ENCODE measurements at regions of chr4 and their contacts with region 1.

Region 1: DNA sequence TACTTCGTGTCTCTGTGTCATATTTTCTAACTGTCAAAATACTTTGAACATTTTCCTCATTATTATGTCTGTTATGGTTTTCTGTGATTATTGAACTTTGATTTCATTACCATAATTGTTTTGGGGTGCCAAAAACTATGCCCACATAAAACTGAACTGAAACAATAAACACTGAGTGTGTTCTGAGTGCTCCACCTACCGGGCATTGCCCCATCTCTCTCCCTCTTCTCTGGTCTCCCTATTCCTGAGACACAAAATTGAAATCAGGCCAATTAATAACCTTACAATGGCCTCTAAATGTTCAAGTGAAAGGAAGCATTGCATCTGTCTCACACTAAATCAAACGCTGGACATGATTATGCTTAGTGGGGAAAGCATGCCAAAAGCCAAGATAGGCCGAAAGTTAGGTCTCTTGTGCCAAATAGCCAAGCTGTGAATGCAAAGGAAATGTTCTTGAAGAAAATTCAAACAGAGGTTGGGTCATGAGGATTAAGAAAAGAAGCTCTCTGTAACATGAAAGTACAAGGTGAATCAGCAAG is 972.3 kb downstream of the PCDH7 start:
- DNase-seq: no peak
- ATAC-seq: no peak
- H3K4me3 ChIP-seq: no peak overlapping the region
- H3K4me3 Mint-ChIP-seq: no peak overlapping the region
- H3K27ac ChIP-seq: no peak overlapping the region
- H3K27ac Mint-ChIP-seq: no peak overlapping the region
- H3K4me1 ChIP-seq: no peaks in the 10 kb centered on the region
- H3K4me1 Mint-ChIP-seq: no peaks in the 10 kb centered on the region
- H3K27me3 ChIP-seq: no peaks in the 10 kb centered on the region
- H3K27me3 Mint-ChIP-seq: no peaks in the 10 kb centered on the region
- CTCF ChIP-seq: no peak

Region 2: DNA sequence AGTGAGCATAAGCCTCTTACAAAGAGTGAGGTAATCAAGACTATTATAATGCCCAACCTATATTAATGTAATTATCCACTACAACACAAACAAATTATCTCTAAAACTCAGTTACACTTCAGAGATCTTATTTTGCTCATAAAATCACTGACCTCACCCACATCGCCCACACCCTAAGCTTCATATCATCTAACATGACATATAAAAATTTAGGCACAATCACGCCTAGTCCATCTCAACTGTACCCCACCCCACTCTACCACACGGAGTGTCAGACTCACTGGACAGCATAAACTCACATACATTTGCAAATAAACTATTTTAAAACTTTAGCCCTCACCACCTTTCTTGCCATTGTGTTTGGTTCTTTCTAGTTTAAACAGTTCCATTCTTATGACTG is 719.9 kb before region 1 on chr4:
- intact Hi-C with region 1: loop called (anchors 5 kb)
- DNase-seq: no peak
- ATAC-seq: no peak
- H3K4me3 ChIP-seq: no peak overlapping the region
- H3K4me3 Mint-ChIP-seq: no peak overlapping the region
- H3K27ac ChIP-seq: no peak overlapping the region
- H3K27ac Mint-ChIP-seq: no peak overlapping the region
- H3K4me1 ChIP-seq: no peaks in the 10 kb centered on the region
- H3K4me1 Mint-ChIP-seq: no peaks in the 10 kb centered on the region
- H3K27me3 ChIP-seq: no peaks in the 10 kb centered on the region
- H3K27me3 Mint-ChIP-seq: no peaks in the 10 kb centered on the region
- CTCF ChIP-seq: no peak

Region 3: GRCh38 chr4:31715302-31715701 is 22.8 kb after region 1 on chr4:
- intact Hi-C with region 1: no loop called
- DNase-seq: no peak
- ATAC-seq: no peak
- H3K4me3 ChIP-seq: no peak overlapping the region
- H3K4me3 Mint-ChIP-seq: no peak overlapping the region
- H3K27ac ChIP-seq: no peak overlapping the region
- H3K27ac Mint-ChIP-seq: no peak overlapping the region
- H3K4me1 ChIP-seq: no peaks in the 10 kb centered on the region
- H3K4me1 Mint-ChIP-seq: no peaks in the 10 kb centered on the region
- H3K27me3 ChIP-seq: no peaks in the 10 kb centered on the region
- H3K27me3 Mint-ChIP-seq: no peaks in the 10 kb centered on the region
- CTCF ChIP-seq: no peak